ENCODE measurements at regions of chr11 and their contacts with region 1.

Region 1: GRCh38 chr11:77547863-77548551 is 41.7 kb upstream of the AQP11 start:
- H3K4me3 Mint-ChIP-seq: peak overlapping the region; percentile 11
- H3K27ac Mint-ChIP-seq: no peak overlapping the region
- H3K4me1 Mint-ChIP-seq: peaks cover 10% of the 10 kb centered on the region
- H3K27me3 Mint-ChIP-seq: no peaks in the 10 kb centered on the region

Region 2: GRCh38 chr11:77127232-77127911 is 420.6 kb before region 1 on chr11:
- intact Hi-C with region 1: loop called (anchors 10 kb)
- H3K4me3 Mint-ChIP-seq: peak overlapping the region; percentile 68
- H3K27ac Mint-ChIP-seq: no peak overlapping the region
- H3K4me1 Mint-ChIP-seq: peaks cover 13% of the 10 kb centered on the region
- H3K27me3 Mint-ChIP-seq: peaks cover 21% of the 10 kb centered on the region

Region 3: GRCh38 chr11:77187776-77188632 is 360.0 kb before region 1 on chr11:
- intact Hi-C with region 1: loop called (anchors 10 kb)
- H3K4me3 Mint-ChIP-seq: no peak overlapping the region
- H3K27ac Mint-ChIP-seq: no peak overlapping the region
- H3K4me1 Mint-ChIP-seq: peaks cover 14% of the 10 kb centered on the region
- H3K27me3 Mint-ChIP-seq: no peaks in the 10 kb centered on the region

Region 4: DNA sequence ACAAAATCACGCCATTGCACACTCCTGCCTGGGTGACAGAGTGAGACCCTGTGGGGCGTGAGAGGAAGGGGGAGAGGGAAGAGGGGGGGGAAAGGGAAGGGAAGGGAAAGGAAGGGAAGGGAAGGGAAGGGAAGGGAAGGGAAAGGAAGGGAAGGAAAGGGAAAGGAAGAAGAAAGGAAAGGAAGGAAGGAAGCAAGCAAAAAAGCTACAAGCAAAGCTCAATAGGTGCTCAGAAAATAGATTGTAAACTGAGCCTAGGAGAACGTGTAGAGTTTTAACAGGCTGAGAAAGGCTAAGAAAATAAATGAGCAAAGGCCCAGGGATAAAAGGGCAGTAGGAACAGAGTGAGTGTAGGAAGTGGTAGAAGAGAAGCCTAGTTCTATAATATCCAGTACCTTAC is 215.7 kb before region 1 on chr11:
- intact Hi-C with region 1: loop called (anchors 10 kb)
- H3K4me3 Mint-ChIP-seq: no peak overlapping the region
- H3K27ac Mint-ChIP-seq: no peak overlapping the region
- H3K4me1 Mint-ChIP-seq: peaks cover under 1% of the 10 kb centered on the region
- H3K27me3 Mint-ChIP-seq: no peaks in the 10 kb centered on the region

Region 5: DNA sequence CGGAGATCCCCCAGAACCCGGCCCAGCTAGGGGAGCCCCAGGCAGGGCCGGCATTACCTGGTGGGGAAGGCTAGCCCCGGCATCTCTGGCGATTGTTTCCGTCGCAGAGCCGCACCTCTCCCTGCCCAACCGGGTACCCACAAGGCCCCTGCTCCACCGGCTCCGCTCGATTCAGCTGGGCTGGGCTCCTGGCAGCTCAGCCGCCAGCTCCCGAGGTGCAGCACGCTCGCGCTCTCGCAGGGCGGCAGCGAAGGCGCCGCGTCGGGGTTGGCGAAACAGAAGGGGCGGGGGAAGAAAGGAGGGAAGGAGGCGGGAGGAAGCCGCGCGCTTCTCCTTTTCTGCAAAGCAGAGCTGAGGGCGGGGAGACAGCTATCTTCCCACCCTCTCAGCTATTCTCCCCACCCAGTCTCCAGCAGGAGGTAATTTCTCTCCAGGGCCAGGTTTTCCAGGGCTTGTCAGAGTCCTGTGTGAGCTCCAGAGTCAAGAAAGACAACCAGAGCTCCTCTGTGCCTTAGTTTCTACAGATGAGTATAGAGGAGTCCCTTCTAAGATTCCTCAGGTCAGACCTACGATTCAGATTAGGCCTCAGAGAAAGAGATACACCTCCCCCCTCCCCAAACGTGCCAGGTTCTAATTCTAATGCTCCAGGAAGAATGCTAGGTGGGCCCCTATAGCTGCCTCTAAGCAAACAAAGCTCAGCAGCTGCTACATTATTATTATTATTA is 136.1 kb before region 1 on chr11:
- intact Hi-C with region 1: loop called (anchors 10 kb)
- H3K4me3 Mint-ChIP-seq: peak overlapping the region; percentile 98
- H3K27ac Mint-ChIP-seq: peak overlapping the region; percentile 96
- H3K4me1 Mint-ChIP-seq: peaks cover 6% of the 10 kb centered on the region
- H3K27me3 Mint-ChIP-seq: no peaks in the 10 kb centered on the region

Region 6: GRCh38 chr11:77424644-77425043 is 123.4 kb before region 1 on chr11:
- intact Hi-C with region 1: no loop called
- H3K4me3 Mint-ChIP-seq: no peak overlapping the region
- H3K27ac Mint-ChIP-seq: no peak overlapping the region
- H3K4me1 Mint-ChIP-seq: peaks cover 5% of the 10 kb centered on the region
- H3K27me3 Mint-ChIP-seq: no peaks in the 10 kb centered on the region

Region 7: DNA sequence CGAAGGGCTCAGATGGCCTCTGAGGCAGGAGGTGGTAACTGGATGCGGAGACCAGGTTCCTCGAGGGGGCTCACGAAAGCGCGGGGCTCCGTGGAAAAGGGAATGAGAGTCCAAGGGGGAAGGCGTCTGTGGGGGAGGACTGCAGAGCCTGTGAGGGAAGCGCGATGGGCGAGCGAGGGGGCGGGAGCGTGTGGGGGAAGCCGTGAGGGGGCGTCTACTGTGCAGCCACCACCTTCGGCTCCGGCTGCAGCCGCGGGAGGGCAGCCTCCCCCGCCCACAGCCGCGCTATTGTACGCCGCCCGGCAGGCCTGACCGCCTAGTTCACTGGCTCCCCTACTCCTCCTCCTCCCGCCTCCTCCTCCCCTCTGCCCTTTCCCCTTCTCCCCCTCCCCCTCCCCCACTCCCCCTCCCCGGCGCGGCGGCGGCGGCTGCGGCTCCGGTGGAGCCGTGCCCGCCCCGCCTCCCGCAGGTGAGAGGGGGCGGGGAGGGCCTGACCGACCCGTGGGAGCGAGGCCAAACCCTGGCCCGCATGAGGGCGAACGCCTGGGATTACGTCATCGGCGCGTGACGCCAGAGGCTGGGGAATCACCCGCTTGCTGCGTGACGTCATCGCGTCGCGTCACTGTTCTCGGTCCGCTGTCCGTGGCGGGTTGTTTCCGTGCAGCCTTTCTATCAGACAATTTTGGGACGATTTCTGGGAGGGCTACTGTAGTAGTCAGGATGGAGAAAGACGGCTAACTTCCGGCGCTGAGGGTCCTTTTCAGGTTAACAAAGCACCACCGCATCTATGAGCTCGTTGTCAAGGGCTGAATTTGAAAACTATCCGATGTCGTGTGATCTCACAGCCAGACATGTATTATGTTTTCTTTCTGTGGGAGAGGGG is 74.0 kb before region 1 on chr11 and contains the start of gene PAK1:
- intact Hi-C with region 1: loop called (anchors 5 kb)
- H3K4me3 Mint-ChIP-seq: peak within 1 kb of the TSS; percentile 79
- H3K27ac Mint-ChIP-seq: peak within 1 kb of the TSS; percentile 79
- H3K4me1 Mint-ChIP-seq: peaks cover 21% of the 10 kb centered on the region
- H3K27me3 Mint-ChIP-seq: peaks cover 18% of the 10 kb centered on the region

Region 8: DNA sequence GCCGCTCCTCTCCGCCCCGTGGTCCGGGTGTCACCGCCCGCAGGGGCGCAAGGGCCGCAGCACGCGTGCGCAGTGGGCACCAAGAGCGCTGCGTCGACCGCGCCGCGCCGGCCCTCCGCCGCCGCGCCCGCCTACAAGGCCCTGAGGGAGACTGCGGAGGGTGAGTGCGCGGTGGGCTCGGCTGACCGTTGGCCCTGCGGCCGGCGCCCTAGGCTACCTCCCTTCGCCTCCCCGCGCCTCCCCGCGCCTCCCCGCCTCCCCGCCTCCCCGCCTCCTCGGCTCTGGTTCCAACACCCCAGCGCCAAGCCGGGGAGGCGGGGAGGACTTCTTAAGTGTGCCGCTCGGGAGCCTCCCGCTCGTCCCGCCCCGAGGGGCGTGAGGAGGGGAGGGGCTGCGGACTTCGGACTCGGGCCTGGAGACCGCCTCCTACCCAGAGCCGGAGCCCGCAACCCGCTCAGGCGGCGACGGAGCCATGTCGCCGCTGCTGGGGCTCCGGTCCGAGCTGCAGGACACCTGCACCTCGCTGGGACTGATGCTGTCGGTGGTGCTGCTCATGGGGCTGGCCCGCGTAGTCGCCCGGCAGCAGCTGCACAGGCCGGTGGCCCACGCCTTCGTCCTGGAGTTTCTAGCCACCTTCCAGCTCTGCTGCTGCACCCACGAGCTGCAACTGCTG is 41.6 kb after region 1 on chr11 and contains the start of gene AQP11:
- intact Hi-C with region 1: no loop called
- H3K4me3 Mint-ChIP-seq: peak within 1 kb of the TSS; percentile 84
- H3K27ac Mint-ChIP-seq: no peak within 1 kb of the TSS
- H3K4me1 Mint-ChIP-seq: peaks cover 22% of the 10 kb centered on the region
- H3K27me3 Mint-ChIP-seq: peaks cover 34% of the 10 kb centered on the region

Region 9: GRCh38 chr11:77820563-77821348 is 272.7 kb after region 1 on chr11 and contains the starts of genes AAMDC and RSF1:
- intact Hi-C with region 1: no loop called
- H3K4me3 Mint-ChIP-seq: peak within 1 kb of the TSS; percentile 99
- H3K27ac Mint-ChIP-seq: peak within 1 kb of the TSS; percentile 83
- H3K4me1 Mint-ChIP-seq: peaks cover 25% of the 10 kb centered on the region
- H3K27me3 Mint-ChIP-seq: no peaks in the 10 kb centered on the region